Heart left ventricle (tissue), 16 donors: ENCODE measurements at regions of chr4 and their contacts with region 1.

Region 1: DNA sequence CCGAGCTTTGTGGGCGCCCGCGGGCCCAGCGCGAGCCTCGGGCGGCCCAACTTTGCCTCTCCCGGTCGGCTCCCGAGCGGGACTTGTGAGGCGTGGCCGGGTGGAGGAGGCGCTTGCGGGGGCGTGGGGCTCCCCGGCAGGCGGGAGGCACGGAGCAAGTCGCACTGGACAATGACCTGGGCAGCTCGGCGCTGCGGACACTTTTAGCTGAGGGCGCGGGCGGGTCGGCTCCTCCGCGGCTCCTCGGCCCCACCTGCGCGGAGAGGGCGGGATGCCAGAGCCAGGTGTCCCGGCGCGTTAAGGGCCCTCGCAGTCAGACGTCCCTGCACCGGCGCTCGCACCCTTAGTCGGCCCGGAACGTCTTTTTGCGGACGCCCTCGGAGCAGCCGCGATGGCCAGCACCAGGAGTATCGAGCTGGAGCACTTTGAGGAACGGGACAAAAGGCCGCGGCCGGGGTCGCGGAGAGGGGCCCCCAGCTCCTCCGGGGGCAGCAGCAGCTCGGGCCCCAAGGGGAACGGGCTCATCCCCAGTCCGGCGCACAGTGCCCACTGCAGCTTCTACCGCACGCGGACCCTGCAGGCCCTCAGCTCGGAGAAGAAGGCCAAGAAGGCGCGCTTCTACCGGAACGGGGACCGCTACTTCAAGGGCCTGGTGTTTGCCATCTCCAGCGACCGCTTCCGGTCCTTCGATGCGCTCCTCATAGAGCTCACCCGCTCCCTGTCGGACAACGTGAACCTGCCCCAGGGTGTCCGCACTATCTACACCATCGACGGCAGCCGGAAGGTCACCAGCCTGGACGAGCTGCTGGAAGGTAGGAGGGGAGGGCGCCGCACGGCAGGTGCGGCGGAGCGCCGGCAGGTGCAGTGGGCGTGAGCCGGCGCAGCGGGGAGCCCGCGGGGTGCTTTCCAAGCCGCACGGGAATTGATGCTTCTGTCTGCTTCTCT is 664 bp downstream of the DCLK2 start:
- DNase-seq: peak; percentile 29 to 78 (median 67)
- ATAC-seq: peak; percentile 29 to 78 (median 67)
- H3K4me3 ChIP-seq: peak overlapping the region; percentile 57 to 90 (median 80)
- H3K27ac ChIP-seq: peak overlapping the region; percentile 73 to 94 (median 84)
- H3K4me1 ChIP-seq: peaks cover 0 to 39% (median 16%) of the 10 kb centered on the region in 12 donors
- H3K27me3 ChIP-seq: peaks cover 0 to 5% (median 0%) of the 10 kb centered on the region in 9 donors
- CTCF ChIP-seq: peak in 5 of 12 donors; percentile 7 to 32 (median 20)
- POLR2A ChIP-seq: no peak

Region 2: GRCh38 chr4:150010525-150011126 is 68.3 kb before region 1 on chr4:
- intact Hi-C with region 1: loop called in 8 of 10 experiments (anchors 2 to 10 kb)
- DNase-seq: peak in 3 of 5 donors; percentile 27 to 40 (median 33)
- ATAC-seq: peak; percentile 78 to 84 (median 84)
- H3K4me3 ChIP-seq: no peak overlapping the region
- H3K27ac ChIP-seq: no peak overlapping the region
- H3K4me1 ChIP-seq: peaks cover 0 to 23% (median 10%) of the 10 kb centered on the region in 12 donors
- H3K27me3 ChIP-seq: no peaks in the 10 kb centered on the region
- CTCF ChIP-seq: peak; percentile 37 to 73 (median 60)
- POLR2A ChIP-seq: no peak

Region 3: GRCh38 chr4:150098214-150098613 is 19.3 kb after region 1 on chr4:
- intact Hi-C with region 1: loop called in 1 of 10 experiments (anchors 1 kb)
- DNase-seq: no peak
- ATAC-seq: peak in 3 of 4 donors; percentile 41 to 50 (median 42)
- H3K4me3 ChIP-seq: no peak overlapping the region
- H3K27ac ChIP-seq: no peak overlapping the region
- H3K4me1 ChIP-seq: no peaks in the 10 kb centered on the region
- H3K27me3 ChIP-seq: no peaks in the 10 kb centered on the region
- CTCF ChIP-seq: no peak
- POLR2A ChIP-seq: no peak

Region 4: GRCh38 chr4:150145090-150145949 is 66.4 kb after region 1 on chr4:
- intact Hi-C with region 1: no loop called
- DNase-seq: no peak
- ATAC-seq: no peak
- H3K4me3 ChIP-seq: no peak overlapping the region
- H3K27ac ChIP-seq: no peak overlapping the region
- H3K4me1 ChIP-seq: peaks cover 0 to 21% (median 9%) of the 10 kb centered on the region in 12 donors
- H3K27me3 ChIP-seq: no peaks in the 10 kb centered on the region
- CTCF ChIP-seq: peak in 1 of 12 donors; percentile 10
- POLR2A ChIP-seq: no peak

Region 5: DNA sequence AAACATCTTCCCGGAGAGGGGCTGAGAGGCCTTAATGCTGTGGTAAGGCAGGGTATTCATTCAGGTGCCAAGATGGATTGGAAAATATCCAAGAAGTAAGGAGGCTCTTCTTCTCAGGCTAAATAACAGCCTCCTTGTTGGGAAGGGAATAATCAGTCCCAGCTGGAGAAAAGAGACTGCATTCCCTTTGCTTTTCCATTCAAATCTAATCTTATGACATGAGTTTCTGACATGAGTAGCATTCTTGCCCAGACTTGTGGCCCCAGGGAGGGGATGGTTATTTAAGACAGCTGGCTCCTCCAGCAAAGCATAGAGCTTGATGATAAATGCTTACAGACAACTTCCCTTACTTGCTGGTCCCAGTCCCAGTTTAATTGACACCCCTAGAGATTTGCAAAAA is 97.6 kb after region 1 on chr4:
- intact Hi-C with region 1: loop called in 3 of 10 experiments (anchors 5 to 10 kb)
- DNase-seq: peak in 3 of 5 donors; percentile 33 to 61 (median 44)
- ATAC-seq: peak in 3 of 4 donors; percentile 24 to 51 (median 32)
- H3K4me3 ChIP-seq: no peak overlapping the region
- H3K27ac ChIP-seq: peak overlapping the region in 6 of 12 donors; percentile 4 to 56 (median 26)
- H3K4me1 ChIP-seq: peaks cover 0 to 61% (median 50%) of the 10 kb centered on the region in 12 donors
- H3K27me3 ChIP-seq: no peaks in the 10 kb centered on the region
- CTCF ChIP-seq: no peak
- POLR2A ChIP-seq: no peak

Region 6: GRCh38 chr4:150217192-150217591 is 138.3 kb after region 1 on chr4:
- intact Hi-C with region 1: loop called in 2 of 10 experiments (anchors 10 kb)
- DNase-seq: no peak
- ATAC-seq: peak in 3 of 4 donors; percentile 51 to 63 (median 52)
- H3K4me3 ChIP-seq: no peak overlapping the region
- H3K27ac ChIP-seq: no peak overlapping the region
- H3K4me1 ChIP-seq: peaks cover 0 to 27% (median 5%) of the 10 kb centered on the region in 12 donors
- H3K27me3 ChIP-seq: no peaks in the 10 kb centered on the region
- CTCF ChIP-seq: peak in 9 of 12 donors; percentile 13 to 49 (median 25)
- POLR2A ChIP-seq: no peak